CD8-positive, alpha-beta memory T cell (primary cell): ENCODE measurements at regions of chr10 and their contacts with region 1.

Region 1: GRCh38 chr10:1003884-1004675 is 15.8 kb downstream of the GTPBP4 start:
- DNase-seq: no peak
- H3K4me3 ChIP-seq: no peak overlapping the region
- H3K4me3 Mint-ChIP-seq: no peak overlapping the region
- H3K27ac ChIP-seq: no peak overlapping the region
- H3K27ac Mint-ChIP-seq: peak overlapping the region in 2 of 8 donors; percentile 43 to 79
- H3K4me1 ChIP-seq: no peaks in the 10 kb centered on the region
- H3K4me1 Mint-ChIP-seq: peaks cover 9 to 27% (median 14%) of the 10 kb centered on the region in 3 donors
- H3K27me3 ChIP-seq: no peaks in the 10 kb centered on the region
- H3K27me3 Mint-ChIP-seq: no peaks in the 10 kb centered on the region

Region 2: GRCh38 chr10:488081-488932 is 515.8 kb before region 1 on chr10:
- CTCF ChIA-PET with region 1: no interaction called
- POLR2A ChIA-PET with region 1: interaction called, 11 read pairs
- DNase-seq: peak in 1 of 5 donors; percentile 30
- H3K4me3 ChIP-seq: no peak overlapping the region
- H3K4me3 Mint-ChIP-seq: peak overlapping the region in 1 of 7 donors; percentile 65
- H3K27ac ChIP-seq: no peak overlapping the region
- H3K27ac Mint-ChIP-seq: peak overlapping the region in 1 of 8 donors; percentile 58
- H3K4me1 ChIP-seq: peaks cover 9% of the 10 kb centered on the region
- H3K4me1 Mint-ChIP-seq: peaks cover 6 to 23% (median 12%) of the 10 kb centered on the region in 3 donors
- H3K27me3 ChIP-seq: no peaks in the 10 kb centered on the region
- H3K27me3 Mint-ChIP-seq: peaks cover 12 to 36% of the 10 kb centered on the region in 2 donors

Region 3: DNA sequence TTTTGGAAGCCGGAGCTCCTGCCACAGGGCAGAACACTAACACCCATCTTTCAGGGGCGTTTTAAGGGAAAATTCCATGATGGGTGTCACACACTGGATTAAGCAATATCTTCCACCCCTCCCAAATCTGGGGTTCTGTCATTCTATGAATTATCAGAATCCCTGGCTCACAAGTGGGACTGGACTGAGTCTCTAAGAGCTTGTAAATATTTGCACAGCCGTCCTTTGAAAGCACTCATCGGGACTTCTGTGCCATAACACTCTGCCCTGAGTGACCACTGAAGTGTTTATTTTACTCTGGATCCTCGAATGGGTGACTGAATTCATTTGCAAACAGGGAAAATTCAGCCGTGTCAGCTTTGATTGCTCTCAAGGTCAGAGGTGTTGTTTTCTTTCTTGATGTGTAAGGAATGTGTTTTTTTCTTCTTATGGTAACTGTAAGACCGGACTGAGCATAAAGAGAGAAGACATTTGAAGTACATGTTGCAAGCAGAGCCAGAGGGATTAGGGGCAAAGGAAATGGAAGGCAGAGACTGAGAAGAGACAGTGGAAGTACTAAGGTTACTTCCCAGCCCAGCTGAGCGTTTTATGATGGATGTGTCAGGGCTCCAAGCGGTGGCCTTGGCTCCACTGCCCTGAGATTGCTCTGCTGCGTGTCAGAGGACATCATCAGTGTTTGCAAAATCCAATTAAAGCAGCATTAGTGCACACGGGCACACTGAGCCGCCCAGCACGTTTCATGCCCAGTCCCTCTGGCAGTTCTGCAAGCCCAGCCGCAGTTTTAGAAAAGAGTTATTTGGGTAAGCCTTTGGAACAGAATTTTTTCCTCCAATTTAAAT is 33.5 kb before region 1 on chr10:
- CTCF ChIA-PET with region 1: no interaction called
- POLR2A ChIA-PET with region 1: no interaction called
- DNase-seq: no peak
- H3K4me3 ChIP-seq: no peak overlapping the region
- H3K4me3 Mint-ChIP-seq: no peak overlapping the region
- H3K27ac ChIP-seq: no peak overlapping the region
- H3K27ac Mint-ChIP-seq: peak overlapping the region in 1 of 8 donors; percentile 6
- H3K4me1 ChIP-seq: peaks cover 4% of the 10 kb centered on the region
- H3K4me1 Mint-ChIP-seq: peaks cover 0 to 8% (median 0%) of the 10 kb centered on the region in 3 donors
- H3K27me3 ChIP-seq: no peaks in the 10 kb centered on the region
- H3K27me3 Mint-ChIP-seq: peaks cover 3 to 45% of the 10 kb centered on the region in 2 donors

Region 4: DNA sequence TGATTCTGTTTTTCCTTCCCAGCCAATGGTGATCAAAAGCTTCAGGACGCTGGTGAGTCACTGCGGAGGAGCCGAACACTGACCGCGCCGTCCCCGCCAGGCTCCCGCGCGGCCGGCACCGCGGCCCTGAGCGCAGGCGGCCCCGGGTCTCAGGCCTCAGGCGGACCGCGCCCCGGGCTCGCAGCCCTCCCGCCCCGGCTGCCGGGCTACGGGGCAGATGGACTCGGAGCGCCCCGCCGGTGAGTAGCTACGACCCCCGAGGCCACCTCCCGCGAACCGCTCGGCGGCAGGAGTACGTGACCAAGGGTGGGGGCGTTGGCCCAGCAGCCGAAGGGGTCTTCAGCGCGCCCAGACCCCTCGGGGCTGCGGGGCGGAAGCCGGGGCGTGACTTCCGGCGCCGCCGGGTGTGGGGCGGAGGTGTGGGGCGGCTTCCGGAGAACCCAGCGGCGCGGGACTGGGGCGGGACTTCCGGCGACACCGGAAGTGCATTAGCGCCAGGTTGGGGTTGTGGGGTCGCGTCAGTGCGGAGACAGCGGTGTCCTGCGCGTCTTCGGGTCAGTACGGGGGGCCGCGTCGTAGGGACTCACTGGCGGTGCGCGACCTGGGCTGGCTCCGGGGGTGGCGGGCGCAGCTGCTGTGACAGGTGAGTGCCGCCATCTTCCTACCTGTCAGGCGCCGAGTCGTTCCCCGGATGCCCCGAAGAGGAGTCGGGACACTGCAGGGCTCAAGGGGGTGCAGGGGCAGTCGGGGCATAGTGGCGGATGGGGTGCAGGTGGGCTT is 52.4 kb after region 1 on chr10 and contains the start of gene WDR37:
- CTCF ChIA-PET with region 1: no interaction called
- POLR2A ChIA-PET with region 1: no interaction called
- DNase-seq: peak; percentile 85 to 92 (median 87)
- H3K4me3 ChIP-seq: peak within 1 kb of the TSS; percentile 88
- H3K4me3 Mint-ChIP-seq: peak within 1 kb of the TSS; percentile 94 to 98 (median 94)
- H3K27ac ChIP-seq: peak within 1 kb of the TSS; percentile 96
- H3K27ac Mint-ChIP-seq: peak within 1 kb of the TSS; percentile 95 to 99 (median 96)
- H3K4me1 ChIP-seq: peaks cover 64% of the 10 kb centered on the region
- H3K4me1 Mint-ChIP-seq: peaks cover 71 to 95% (median 88%) of the 10 kb centered on the region in 3 donors
- H3K27me3 ChIP-seq: no peaks in the 10 kb centered on the region
- H3K27me3 Mint-ChIP-seq: no peaks in the 10 kb centered on the region
- total RNA-seq, gene WDR37: 14.5 to 15.8 TPM